CD4-positive, alpha-beta T cell (primary cell): ENCODE measurements at regions of chr12 and their contacts with region 1.

Region 1: GRCh38 chr12:48795480-48796455 is 6.9 kb upstream of the ADCY6 start:
- DNase-seq: peak; percentile 21 to 76 (median 42)
- ATAC-seq: peak; percentile 79
- H3K4me3 ChIP-seq: no peak overlapping the region
- H3K4me3 Mint-ChIP-seq: no peak overlapping the region
- H3K27ac ChIP-seq: no peak overlapping the region
- H3K27ac Mint-ChIP-seq: no peak overlapping the region
- H3K4me1 ChIP-seq: peaks cover 7% of the 10 kb centered on the region
- H3K4me1 Mint-ChIP-seq: no peaks in the 10 kb centered on the region
- H3K27me3 ChIP-seq: no peaks in the 10 kb centered on the region
- H3K27me3 Mint-ChIP-seq: peaks cover 5% of the 10 kb centered on the region
- CTCF ChIP-seq: peak; percentile 96

Region 2: DNA sequence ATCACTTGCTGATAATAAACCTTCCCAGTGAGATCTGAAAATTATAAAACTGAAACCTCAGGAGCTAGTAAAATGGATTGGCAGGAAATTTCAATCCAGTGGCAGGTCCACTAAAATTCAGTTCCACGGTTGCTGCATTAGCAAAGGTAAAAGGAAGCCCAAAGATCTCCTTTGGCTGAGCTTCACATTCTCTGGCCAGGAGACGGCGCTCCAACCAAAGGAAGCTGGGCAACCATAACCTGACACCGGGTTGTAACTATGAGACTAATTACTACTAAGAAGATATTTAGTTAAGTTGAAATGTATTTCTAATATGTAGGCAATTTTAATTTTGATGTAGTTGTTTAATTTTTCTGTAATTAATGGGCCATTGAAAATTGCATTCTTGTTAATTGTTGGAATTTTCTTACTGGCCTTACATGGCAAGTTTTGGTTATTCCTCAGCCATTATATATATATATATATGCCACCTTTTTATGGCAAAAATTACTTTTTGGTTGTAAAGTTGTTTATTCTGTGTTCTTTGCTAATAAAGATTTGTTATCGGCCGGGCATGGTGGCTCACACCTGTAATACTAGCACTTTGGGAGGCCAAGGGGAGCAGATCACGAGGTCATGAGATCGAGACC is 253.4 kb before region 1 on chr12:
- CTCF ChIA-PET with region 1: interaction called, 3 read pairs
- POLR2A ChIA-PET with region 1: no interaction called
- intact Hi-C with region 1: loop called in 1 of 2 experiments (anchors 10 kb)
- DNase-seq: peak in 13 of 14 experiments; percentile 19 to 49 (median 41)
- ATAC-seq: no peak
- H3K4me3 ChIP-seq: no peak overlapping the region
- H3K4me3 Mint-ChIP-seq: no peak overlapping the region
- H3K27ac ChIP-seq: no peak overlapping the region
- H3K27ac Mint-ChIP-seq: no peak overlapping the region
- H3K4me1 ChIP-seq: no peaks in the 10 kb centered on the region
- H3K4me1 Mint-ChIP-seq: no peaks in the 10 kb centered on the region
- H3K27me3 ChIP-seq: no peaks in the 10 kb centered on the region
- H3K27me3 Mint-ChIP-seq: peaks cover 8% of the 10 kb centered on the region
- CTCF ChIP-seq: peak; percentile 43

Region 3: GRCh38 chr12:49014547-49014946 is 218.8 kb after region 1 on chr12:
- CTCF ChIA-PET with region 1: no interaction called
- POLR2A ChIA-PET with region 1: no interaction called
- intact Hi-C with region 1: no loop called
- DNase-seq: no peak
- ATAC-seq: no peak
- H3K4me3 ChIP-seq: no peak overlapping the region
- H3K4me3 Mint-ChIP-seq: no peak overlapping the region
- H3K27ac ChIP-seq: no peak overlapping the region
- H3K27ac Mint-ChIP-seq: no peak overlapping the region
- H3K4me1 ChIP-seq: peaks cover 22% of the 10 kb centered on the region
- H3K4me1 Mint-ChIP-seq: peaks cover 44% of the 10 kb centered on the region
- H3K27me3 ChIP-seq: no peaks in the 10 kb centered on the region
- H3K27me3 Mint-ChIP-seq: no peaks in the 10 kb centered on the region
- CTCF ChIP-seq: no peak